ENCODE measurements at regions of chr7 and their contacts with region 1.

Region 1: GRCh38 chr7:5086256-5086655 is 40.6 kb downstream of the RBAK start:
- DNase-seq: no peak
- H3K27ac ChIP-seq: no peak overlapping the region
- CTCF ChIP-seq: no peak

Region 2: DNA sequence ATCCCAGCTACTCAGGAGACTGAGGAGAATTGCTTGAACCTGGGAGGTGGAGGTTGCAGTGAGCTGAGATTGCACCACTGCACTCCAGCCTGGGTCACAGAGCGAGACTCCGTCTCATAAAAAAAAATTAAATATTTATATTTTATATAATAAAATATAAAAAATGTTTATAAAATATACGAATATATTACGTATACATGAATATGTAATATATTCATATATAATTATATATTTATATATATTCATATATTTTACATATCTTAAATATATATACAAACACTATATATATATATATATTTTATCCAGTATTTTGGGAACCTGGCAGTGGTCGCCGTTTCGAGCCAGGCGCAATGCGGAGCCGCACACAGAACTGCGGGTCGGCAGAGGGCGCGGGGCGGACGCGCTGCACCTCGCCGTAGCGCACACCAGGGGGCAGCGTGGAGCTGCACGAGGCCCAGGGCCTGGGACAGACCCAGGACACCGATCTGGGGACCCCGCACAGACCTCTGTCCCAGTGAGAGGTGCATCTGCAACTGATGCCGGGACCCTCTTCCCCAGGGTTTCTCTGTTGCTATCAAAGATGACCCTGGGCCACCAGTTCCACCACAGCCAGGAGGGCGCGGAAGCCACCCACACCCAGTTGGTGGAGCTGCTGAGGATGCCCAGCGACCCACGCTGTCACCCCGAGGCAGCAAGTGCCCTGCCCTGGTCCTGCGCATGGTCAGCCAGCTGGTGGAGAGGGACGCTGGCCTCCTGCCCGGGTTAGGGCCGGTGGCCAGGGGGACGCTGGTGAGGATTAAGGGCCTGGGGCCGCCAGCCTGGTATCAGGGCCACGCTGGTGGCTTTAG is 288.2 kb before region 1 on chr7:
- CTCF ChIA-PET with region 1: interaction called, 25 read pairs
- POLR2A ChIA-PET with region 1: no interaction called
- DNase-seq: peak; percentile 70
- H3K27ac ChIP-seq: 0 out of 2 replicates have a peak overlapping the region, but pooled peaks have one; percentile 4
- CTCF ChIP-seq: peak; percentile 77

Region 3: DNA sequence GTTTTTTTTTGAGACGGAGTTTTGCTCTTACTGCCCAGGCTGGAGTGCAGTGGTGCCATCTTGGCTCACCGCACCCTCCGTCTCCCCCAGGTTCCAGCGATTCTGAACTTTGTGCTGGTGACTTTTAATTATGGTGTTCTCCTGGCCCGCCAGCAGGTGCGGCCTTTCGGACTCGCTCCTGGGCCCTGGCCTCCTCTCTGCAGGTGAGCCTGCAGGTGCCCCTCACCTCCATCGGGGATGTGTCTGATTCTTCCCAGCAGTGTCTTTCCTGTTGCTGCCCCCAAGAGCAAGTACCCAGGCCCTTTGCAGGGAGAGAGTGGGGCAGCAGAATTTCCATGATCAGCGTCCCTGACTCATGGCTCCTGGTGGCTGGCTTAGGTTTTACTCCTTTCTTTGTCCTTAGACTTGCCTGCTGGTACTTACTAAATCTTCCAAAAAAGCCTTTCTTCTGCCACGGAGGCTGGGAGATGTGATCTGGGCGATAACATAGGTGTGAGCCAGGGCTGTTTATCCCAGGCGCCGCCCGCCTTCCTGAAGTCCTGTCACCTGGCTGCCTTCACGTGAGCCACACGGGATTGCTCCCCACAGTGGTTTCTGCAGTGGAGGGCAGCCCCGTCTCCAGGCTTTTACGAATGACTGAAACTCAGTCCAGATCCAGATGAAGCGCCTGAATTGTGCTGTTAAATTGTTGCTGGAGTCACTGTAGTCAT is 114.5 kb after region 1 on chr7:
- CTCF ChIA-PET with region 1: no interaction called
- POLR2A ChIA-PET with region 1: no interaction called
- DNase-seq: no peak
- H3K27ac ChIP-seq: no peak overlapping the region
- CTCF ChIP-seq: no peak

Measured in RWPE1 (cell line).